ENCODE measurements at regions of chr2 and their contacts with region 1.

Region 1: DNA sequence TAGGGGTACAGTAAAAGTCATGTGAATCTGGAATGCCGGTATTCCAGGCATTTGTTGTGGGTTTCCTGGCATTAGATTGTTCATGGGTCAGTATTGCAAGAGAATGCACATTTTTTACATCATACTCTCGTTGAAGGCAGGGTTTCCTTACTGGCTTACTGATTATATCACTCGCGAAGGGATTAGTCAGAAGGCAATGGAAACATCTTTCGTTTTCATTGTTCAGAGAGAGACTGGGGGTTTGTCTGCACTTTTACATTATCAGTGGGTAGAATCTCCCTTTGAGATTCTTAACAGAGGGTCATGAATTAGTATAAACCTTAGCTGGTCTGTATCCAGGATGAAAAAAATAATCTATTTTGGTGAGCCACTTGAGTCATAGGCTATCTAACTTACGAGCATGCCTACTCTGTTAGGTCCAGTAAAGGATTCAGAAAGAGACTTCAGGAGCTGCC is 229.3 kb upstream of the EPAS1 start:
- DNase-seq: no peak
- ATAC-seq: peak in 3 of 4 donors; percentile 36 to 49 (median 38)
- H3K4me3 ChIP-seq: no peak overlapping the region
- H3K27ac ChIP-seq: peak overlapping the region; percentile 37
- H3K4me1 ChIP-seq: no peaks in the 10 kb centered on the region
- H3K27me3 ChIP-seq: no peaks in the 10 kb centered on the region
- CTCF ChIP-seq: no peak

Region 2: DNA sequence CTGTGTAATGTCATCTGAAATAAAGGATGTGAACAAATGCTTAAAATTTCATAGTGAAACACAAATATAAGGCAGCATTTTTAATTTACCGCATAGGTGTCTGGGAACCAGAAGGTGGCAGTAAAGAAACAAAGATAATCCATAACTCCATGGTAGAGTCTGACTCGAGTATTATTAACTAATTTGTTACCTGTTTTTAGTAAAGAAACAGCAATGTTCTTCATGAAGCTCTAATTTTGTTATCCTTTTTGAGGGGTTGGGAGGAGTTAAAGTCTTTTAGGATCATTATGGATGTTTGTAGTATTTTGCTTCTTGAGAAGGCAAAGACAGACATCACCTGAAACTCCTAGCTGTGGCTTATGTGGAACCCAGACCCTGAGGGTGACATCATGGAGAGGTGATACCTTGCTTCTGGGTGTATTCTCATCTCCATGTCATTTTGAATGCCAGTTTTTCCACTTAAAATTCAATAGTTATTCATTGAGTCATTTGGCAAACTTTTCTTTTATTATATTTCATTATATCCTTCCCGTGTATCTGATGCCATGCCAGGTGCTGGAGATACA is 56.9 kb before region 1 on chr2:
- intact Hi-C with region 1: loop called in 1 of 2 experiments (anchors 5 kb)
- DNase-seq: no peak
- ATAC-seq: peak in 1 of 4 donors; percentile 64
- H3K4me3 ChIP-seq: no peak overlapping the region
- H3K27ac ChIP-seq: no peak overlapping the region
- H3K4me1 ChIP-seq: no peaks in the 10 kb centered on the region
- H3K27me3 ChIP-seq: no peaks in the 10 kb centered on the region
- CTCF ChIP-seq: peak; percentile 65

Measured in psoas muscle (tissue), 8 donors.